ENCODE measurements at regions of chr20 and their contacts with region 1.

Region 1: DNA sequence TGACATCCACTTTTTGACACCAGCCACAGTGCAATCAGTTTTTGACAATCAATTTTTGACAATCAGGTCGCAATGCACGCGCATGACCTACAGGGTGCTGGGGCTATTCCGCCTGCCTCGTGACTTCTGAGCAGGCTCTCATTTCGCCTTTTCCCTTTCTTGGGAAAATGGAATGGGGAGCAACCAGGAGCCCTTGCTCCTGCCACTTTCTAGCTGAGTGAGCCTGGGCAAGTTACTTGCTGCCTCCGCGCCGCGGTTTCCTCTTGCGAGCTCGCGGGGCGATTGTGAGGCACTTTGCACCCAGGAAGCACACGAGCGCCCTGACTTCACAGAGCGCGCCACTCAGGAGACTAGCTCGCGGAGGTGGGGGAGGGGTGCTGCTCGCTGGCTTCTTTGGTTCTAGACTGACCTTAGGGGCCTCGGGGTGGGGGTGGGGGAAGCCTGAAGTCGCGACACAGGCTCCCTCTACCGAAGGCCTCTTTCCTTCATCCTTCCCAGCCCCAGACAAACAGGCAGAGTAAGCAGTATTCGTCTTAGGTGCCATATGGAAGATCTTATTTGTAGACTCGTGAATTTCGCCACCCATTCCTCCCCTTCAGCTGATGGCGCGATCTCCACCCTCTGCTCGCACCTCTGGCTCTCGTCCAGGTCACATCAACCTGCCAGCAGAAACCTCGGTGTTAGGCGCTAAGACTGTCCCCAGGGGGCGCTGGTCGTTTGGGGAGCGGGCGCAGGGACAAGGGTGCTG is 4.6 kb downstream of the TP53TG5 start:
- DNase-seq: peak; percentile 89 to 95
- ATAC-seq: peak; percentile 86 to 94 (median 88)
- H3K4me3 ChIP-seq: peak overlapping the region; percentile 63
- H3K27ac ChIP-seq: peak overlapping the region; percentile 57
- H3K4me1 ChIP-seq: no peaks in the 10 kb centered on the region
- H3K27me3 ChIP-seq: no peaks in the 10 kb centered on the region
- CTCF ChIP-seq: peak; percentile 83

Region 2: DNA sequence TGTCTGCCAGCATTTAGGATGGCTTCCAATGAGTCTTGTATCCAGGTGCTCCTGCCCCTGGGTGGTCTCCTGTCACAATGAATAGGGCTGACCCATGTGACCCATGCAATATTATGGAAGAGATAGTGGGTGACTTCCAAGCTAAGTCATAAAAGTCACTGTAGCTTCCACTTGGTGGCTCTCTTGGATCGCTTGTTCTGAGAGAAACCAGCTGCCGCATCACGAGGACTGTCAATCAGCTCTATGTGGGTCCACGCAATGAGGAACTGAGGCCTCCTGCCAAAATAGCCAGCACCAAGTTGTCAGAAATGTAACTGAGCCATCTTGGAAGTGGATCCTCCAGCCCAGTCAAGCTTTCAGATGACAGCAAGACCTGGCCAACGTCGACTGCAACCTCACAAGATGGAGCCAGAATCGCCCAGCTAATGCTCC is 50.6 kb before region 1 on chr20:
- intact Hi-C with region 1: loop called (anchors 2 to 5 kb)
- DNase-seq: peak; percentile 75 to 90
- ATAC-seq: peak; percentile 75 to 88 (median 83)
- H3K4me3 ChIP-seq: no peak overlapping the region
- H3K27ac ChIP-seq: peak overlapping the region; percentile 69
- H3K4me1 ChIP-seq: peaks cover 3% of the 10 kb centered on the region
- H3K27me3 ChIP-seq: no peaks in the 10 kb centered on the region
- CTCF ChIP-seq: peak; percentile 58

Region 3: GRCh38 chr20:45392733-45393132 is 19.2 kb after region 1 on chr20:
- intact Hi-C with region 1: loop called in 1 of 2 experiments (anchors 1 kb)
- DNase-seq: no peak
- ATAC-seq: peak in 1 of 4 donors; percentile 31
- H3K4me3 ChIP-seq: no peak overlapping the region
- H3K27ac ChIP-seq: no peak overlapping the region
- H3K4me1 ChIP-seq: no peaks in the 10 kb centered on the region
- H3K27me3 ChIP-seq: no peaks in the 10 kb centered on the region
- CTCF ChIP-seq: no peak

Region 4: GRCh38 chr20:45406259-45407066 is 32.9 kb after region 1 on chr20:
- intact Hi-C with region 1: loop called in 1 of 2 experiments (anchors 1 kb)
- DNase-seq: peak; percentile 84 to 90
- ATAC-seq: peak; percentile 75 to 83 (median 78)
- H3K4me3 ChIP-seq: peak overlapping the region; percentile 99
- H3K27ac ChIP-seq: peak overlapping the region; percentile 99
- H3K4me1 ChIP-seq: peaks cover 33% of the 10 kb centered on the region
- H3K27me3 ChIP-seq: no peaks in the 10 kb centered on the region
- CTCF ChIP-seq: no peak

Region 5: DNA sequence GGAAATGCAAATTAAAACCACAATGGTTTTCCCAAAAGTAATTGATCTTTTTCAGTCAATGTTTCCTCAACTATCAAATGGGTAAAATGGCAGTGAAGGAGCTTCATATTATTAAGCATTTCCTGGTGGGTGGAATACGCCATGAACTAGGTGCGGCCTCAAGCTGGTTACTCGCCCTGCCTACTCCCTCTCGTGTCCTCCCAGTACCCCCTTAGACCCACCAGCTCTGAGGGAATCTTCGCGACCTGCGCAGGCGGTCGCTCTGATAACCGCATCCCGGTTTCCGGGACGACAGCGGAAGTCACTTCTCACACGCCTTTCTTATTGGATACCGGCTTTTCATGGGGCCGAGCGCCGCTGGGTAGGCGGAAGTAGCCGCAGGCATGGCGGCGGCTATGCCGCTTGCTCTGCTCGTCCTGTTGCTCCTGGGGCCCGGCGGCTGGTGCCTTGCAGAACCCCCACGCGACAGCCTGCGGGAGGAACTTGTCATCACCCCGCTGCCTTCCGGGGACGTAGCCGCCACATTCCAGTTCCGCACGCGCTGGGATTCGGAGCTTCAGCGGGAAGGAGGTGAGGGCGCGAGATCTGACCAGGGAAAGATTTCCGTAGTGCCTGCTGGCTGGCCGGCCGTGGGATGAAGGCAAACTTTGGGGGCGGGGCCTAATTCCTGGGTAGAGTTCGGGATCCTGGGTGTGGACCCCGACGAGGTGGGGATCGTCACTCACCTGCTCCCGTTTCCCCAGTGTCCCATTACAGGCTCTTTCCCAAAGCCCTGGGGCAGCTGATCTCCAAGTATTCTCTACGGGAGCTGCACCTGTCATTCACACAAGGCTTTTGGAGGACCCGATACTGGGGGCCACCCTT is 42.5 kb after region 1 on chr20 and contains the start of gene PIGT:
- intact Hi-C with region 1: loop called in 1 of 2 experiments (anchors 5 kb)
- DNase-seq: peak; percentile 84 to 91
- ATAC-seq: peak; percentile 84 to 97 (median 93)
- H3K4me3 ChIP-seq: peak within 1 kb of the TSS; percentile 82
- H3K27ac ChIP-seq: peak within 1 kb of the TSS; percentile 85
- H3K4me1 ChIP-seq: peaks cover 20% of the 10 kb centered on the region
- H3K27me3 ChIP-seq: no peaks in the 10 kb centered on the region
- CTCF ChIP-seq: no peak
- total RNA-seq, gene PIGT: 48.0 to 74.9 (median 57.1) TPM

Region 6: DNA sequence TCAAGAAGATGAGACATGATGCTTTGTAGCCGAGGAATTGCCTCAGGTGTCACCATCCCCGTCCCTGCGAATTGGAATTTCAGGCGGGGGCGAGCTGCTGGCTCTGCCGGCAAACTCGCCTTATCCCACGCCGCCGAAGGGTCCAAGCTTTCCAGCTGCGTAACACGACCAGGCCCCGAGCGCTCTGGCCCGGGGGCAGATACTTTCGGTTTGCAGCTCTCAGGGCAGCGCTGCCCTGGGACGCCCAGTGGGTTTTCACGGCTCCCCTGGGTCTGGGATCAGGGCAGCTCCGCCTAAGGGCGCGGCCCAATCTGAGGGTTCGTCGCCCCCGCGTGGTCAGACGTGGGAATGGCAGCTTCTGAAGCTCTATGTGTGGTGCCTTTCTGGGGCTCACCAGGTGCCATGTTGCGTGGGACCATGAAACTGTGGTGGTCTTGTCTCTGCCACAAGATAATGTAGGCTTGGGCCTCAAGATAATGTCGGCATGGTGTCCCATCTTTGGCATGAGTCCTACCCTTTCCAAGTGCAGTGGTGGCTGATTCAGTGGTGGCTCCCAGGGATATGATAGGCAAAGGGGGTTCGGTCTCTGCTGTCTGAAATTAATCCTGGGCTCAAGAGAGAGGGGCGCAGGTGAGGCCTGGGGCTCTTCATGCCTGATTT is 63.3 kb after region 1 on chr20:
- intact Hi-C with region 1: loop called (anchors 1 to 5 kb)
- DNase-seq: peak; percentile 89 to 94
- ATAC-seq: peak; percentile 99 to 100 (median 99)
- H3K4me3 ChIP-seq: peak overlapping the region; percentile 83
- H3K27ac ChIP-seq: peak overlapping the region; percentile 72
- H3K4me1 ChIP-seq: peaks cover 7% of the 10 kb centered on the region
- H3K27me3 ChIP-seq: no peaks in the 10 kb centered on the region
- CTCF ChIP-seq: peak; percentile 97

Measured in psoas muscle (tissue), 8 donors.